H1 (cell line): ENCODE measurements at regions of chr3 and their contacts with region 1.

Region 1: GRCh38 chr3:189169728-189170127 is 2.0 kb upstream of the TPRG1 start:
- DNase-seq: peak in 1 of 2 experiments; percentile 45
- H3K4me3 ChIP-seq: no peak overlapping the region
- H3K27ac ChIP-seq: no peak overlapping the region
- H3K4me1 ChIP-seq: no peaks in the 10 kb centered on the region
- H3K27me3 ChIP-seq: no peaks in the 10 kb centered on the region
- CTCF ChIP-seq: peak; percentile 44 to 74 (median 55)
- EP300 ChIP-seq: no peak
- POLR2A ChIP-seq: no peak
- RAD21 ChIP-seq: peak; percentile 37 to 45

Region 2: DNA sequence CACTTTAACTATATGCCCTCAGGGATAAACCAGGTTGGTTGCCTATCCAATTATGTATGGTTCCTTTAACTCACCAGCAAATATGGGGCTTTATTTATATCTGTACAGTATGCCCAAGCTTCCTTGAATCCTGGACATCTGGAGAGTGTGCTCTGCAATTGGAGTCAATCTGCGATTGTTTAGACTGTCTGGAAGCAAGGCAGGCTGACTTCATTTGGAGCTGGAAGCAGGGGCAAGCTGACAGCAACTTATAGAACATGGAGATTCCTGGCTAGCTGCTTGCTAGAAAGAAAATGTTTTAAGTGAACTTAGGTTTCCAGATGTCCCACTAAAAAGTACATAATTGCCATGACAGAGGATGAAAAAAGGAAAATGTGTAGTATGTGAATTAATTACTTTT is 61.7 kb before region 1 on chr3:
- CTCF ChIA-PET with region 1: no interaction called
- POLR2A ChIA-PET with region 1: no interaction called
- DNase-seq: no peak
- H3K4me3 ChIP-seq: no peak overlapping the region
- H3K27ac ChIP-seq: no peak overlapping the region
- H3K4me1 ChIP-seq: no peaks in the 10 kb centered on the region
- H3K27me3 ChIP-seq: no peaks in the 10 kb centered on the region
- CTCF ChIP-seq: no peak
- EP300 ChIP-seq: no peak
- POLR2A ChIP-seq: no peak
- RAD21 ChIP-seq: no peak

Region 3: GRCh38 chr3:189148081-189148507 is 21.6 kb before region 1 on chr3:
- CTCF ChIA-PET with region 1: interaction called, 11 read pairs
- POLR2A ChIA-PET with region 1: no interaction called
- DNase-seq: peak; percentile 9 to 79
- H3K4me3 ChIP-seq: no peak overlapping the region
- H3K27ac ChIP-seq: no peak overlapping the region
- H3K4me1 ChIP-seq: peaks cover 0 to 5% (median 1%) of the 10 kb centered on the region in 4 experiments; a peak in 3 of 7 replicates
- H3K27me3 ChIP-seq: no peaks in the 10 kb centered on the region
- CTCF ChIP-seq: peak in 2 of 3 experiments; percentile 64 to 84; a peak in 3 of 4 replicates
- EP300 ChIP-seq: no peak
- POLR2A ChIP-seq: no peak
- RAD21 ChIP-seq: peak; percentile 79 to 80

Region 4: GRCh38 chr3:189157232-189158007 is 12.3 kb before region 1 on chr3:
- CTCF ChIA-PET with region 1: interaction called, 13 read pairs
- POLR2A ChIA-PET with region 1: no interaction called
- DNase-seq: no peak
- H3K4me3 ChIP-seq: no peak overlapping the region
- H3K27ac ChIP-seq: no peak overlapping the region
- H3K4me1 ChIP-seq: peaks cover 0 to 2% (median 0%) of the 10 kb centered on the region in 4 experiments; a peak in 2 of 7 replicates
- H3K27me3 ChIP-seq: no peaks in the 10 kb centered on the region
- CTCF ChIP-seq: no peak
- EP300 ChIP-seq: no peak
- POLR2A ChIP-seq: no peak
- RAD21 ChIP-seq: no peak

Region 5: GRCh38 chr3:189195302-189195701 is 25.6 kb after region 1 on chr3:
- CTCF ChIA-PET with region 1: interaction called, 15 read pairs
- POLR2A ChIA-PET with region 1: no interaction called
- DNase-seq: peak in 1 of 2 experiments; percentile 49
- H3K4me3 ChIP-seq: no peak overlapping the region
- H3K27ac ChIP-seq: no peak overlapping the region
- H3K4me1 ChIP-seq: no peaks in the 10 kb centered on the region
- H3K27me3 ChIP-seq: no peaks in the 10 kb centered on the region
- CTCF ChIP-seq: peak; percentile 57 to 63 (median 63)
- EP300 ChIP-seq: no peak
- POLR2A ChIP-seq: no peak
- RAD21 ChIP-seq: peak; percentile 6 to 12; a peak in 1 of 4 replicates

Region 6: DNA sequence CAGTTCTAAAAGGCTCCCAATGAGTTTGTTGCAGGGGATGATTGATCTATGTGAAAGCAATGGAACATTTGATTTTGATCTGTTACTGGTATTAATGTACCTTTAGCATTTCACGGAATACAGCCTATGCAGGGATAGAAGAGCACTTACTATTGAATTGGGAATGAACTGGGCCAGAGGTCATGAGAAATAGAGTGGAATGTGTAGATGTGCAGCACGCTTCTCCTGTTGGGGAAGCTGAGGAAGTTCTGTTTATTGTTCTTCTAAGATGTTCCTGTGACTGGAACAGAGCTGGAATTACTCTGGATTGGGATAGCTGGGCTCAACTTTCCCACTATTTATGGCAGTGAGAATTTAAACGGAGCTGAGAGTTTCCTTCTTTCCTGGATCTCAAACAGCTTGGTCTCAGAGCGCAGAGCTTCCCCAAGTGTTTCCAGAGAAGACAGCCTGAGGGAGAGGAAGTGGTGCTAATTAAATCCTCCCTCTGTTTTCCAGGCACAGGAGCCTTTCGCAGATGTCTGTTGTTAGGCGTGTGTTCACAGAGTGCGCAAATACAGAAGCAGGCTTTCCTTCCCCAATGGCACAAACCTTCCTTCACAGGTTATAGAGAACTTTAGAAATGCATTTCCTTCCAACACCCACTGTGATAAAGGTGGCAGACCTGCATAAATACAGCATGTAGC is 34.6 kb after region 1 on chr3:
- CTCF ChIA-PET with region 1: interaction called, 12 read pairs
- POLR2A ChIA-PET with region 1: no interaction called
- DNase-seq: no peak
- H3K4me3 ChIP-seq: no peak overlapping the region
- H3K27ac ChIP-seq: no peak overlapping the region
- H3K4me1 ChIP-seq: peaks cover 0 to 3% (median 0%) of the 10 kb centered on the region in 4 experiments; a peak in 1 of 7 replicates
- H3K27me3 ChIP-seq: no peaks in the 10 kb centered on the region
- CTCF ChIP-seq: no peak
- EP300 ChIP-seq: no peak
- POLR2A ChIP-seq: no peak
- RAD21 ChIP-seq: no peak

Region 7: DNA sequence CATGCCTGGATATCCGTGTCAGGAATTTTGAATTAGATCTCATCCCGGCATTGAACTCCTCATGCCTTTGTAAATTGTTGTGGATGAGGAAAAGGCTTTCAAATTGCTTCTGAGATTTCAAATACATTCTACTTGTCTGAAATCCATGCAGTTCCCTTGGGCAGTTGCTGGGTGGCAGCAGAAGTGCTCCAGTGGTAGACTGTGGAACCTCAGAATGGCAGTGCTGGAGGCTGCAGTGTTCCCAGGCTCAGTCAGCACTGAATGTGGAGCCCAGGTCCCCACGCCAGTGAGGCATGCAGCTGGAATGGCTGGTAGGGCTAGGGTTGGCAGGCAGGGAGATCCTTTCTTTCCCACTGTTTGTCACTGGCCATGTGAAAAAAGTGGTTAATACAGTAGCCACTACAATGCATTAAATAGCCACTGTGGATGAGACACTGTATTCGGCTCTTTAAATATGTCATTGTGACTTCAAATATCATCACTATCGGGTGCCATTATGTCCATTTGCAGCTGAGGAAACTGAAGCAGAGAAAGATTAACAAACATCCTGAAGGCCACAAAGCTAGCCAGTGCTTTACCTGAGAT is 100.6 kb after region 1 on chr3:
- CTCF ChIA-PET with region 1: no interaction called
- POLR2A ChIA-PET with region 1: no interaction called
- DNase-seq: peak in 1 of 2 experiments; percentile 33
- H3K4me3 ChIP-seq: no peak overlapping the region
- H3K27ac ChIP-seq: no peak overlapping the region
- H3K4me1 ChIP-seq: no peaks in the 10 kb centered on the region
- H3K27me3 ChIP-seq: no peaks in the 10 kb centered on the region
- CTCF ChIP-seq: peak; percentile 62 to 77 (median 75)
- EP300 ChIP-seq: no peak
- POLR2A ChIP-seq: no peak
- RAD21 ChIP-seq: peak; percentile 82 to 88

Region 8: DNA sequence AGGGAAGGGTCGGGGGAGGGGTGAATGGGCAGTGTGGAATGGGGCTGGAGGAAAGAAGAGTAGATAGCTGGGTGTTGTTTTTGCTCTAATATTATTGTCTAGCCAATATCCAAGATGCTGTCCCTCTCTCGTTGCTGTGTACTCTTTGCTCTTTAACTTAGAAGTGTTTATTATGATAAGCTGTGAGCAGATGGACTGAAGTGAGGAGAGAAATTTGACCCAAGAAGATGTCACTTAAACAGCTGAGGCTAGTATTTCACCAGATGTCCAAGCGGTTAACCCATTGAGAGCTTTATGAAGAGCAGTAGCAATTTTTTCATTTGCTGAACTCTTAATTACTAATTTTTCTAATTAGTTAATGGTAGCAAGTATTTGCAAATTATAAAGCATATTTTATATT is 249.3 kb after region 1 on chr3:
- CTCF ChIA-PET with region 1: no interaction called
- POLR2A ChIA-PET with region 1: no interaction called
- DNase-seq: no peak
- H3K4me3 ChIP-seq: no peak overlapping the region
- H3K27ac ChIP-seq: no peak overlapping the region
- H3K4me1 ChIP-seq: peaks cover 0 to 3% (median 0%) of the 10 kb centered on the region in 4 experiments; a peak in 1 of 7 replicates
- H3K27me3 ChIP-seq: no peaks in the 10 kb centered on the region
- CTCF ChIP-seq: no peak
- EP300 ChIP-seq: no peak
- POLR2A ChIP-seq: no peak
- RAD21 ChIP-seq: no peak